ENCODE measurements at regions of chr4 and their contacts with region 1.

Region 1: GRCh38 chr4:20773144-20773997 is 73.1 kb downstream of the PACRGL start:
- DNase-seq: peak; percentile 59
- ATAC-seq: peak; percentile 99
- H3K4me3 Mint-ChIP-seq: no peak overlapping the region
- H3K27ac Mint-ChIP-seq: no peak overlapping the region
- H3K4me1 Mint-ChIP-seq: peaks cover 3% of the 10 kb centered on the region; the same call in 1 of the 2 replicates
- H3K27me3 Mint-ChIP-seq: no peaks in the 10 kb centered on the region
- CTCF ChIP-seq: peak; percentile 64

Region 2: GRCh38 chr4:20676501-20677197 is 96.7 kb before region 1 on chr4:
- CTCF ChIA-PET with region 1: no interaction called
- POLR2A ChIA-PET with region 1: no interaction called
- DNase-seq: no peak
- ATAC-seq: peak; percentile 31; the same call in 1 of the 2 replicates
- H3K4me3 Mint-ChIP-seq: no peak overlapping the region
- H3K27ac Mint-ChIP-seq: 0 out of 2 replicates have a peak overlapping the region, but pooled peaks have one; percentile 15
- H3K4me1 Mint-ChIP-seq: peaks cover 40% of the 10 kb centered on the region
- H3K27me3 Mint-ChIP-seq: no peaks in the 10 kb centered on the region
- CTCF ChIP-seq: no peak

Region 3: DNA sequence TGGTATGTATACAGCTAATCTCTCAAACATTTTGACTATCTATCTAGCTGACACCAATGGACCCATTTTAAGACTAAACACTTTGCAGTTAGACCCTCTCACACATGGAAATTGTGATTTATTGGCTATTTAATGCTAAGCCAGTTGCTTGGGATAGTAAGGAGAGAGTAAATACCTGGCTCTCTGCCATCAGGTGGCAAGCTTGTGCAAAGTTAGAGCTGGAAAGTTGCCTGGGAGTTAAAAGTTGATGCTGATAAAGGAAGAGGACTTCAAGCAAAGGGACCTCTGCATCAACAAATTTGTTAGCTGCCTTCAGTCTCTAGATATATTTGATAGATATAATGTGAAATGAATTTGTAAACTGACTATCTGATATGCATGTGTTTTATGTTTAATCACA is 12.0 kb before region 1 on chr4:
- CTCF ChIA-PET with region 1: interaction called, 13 read pairs
- POLR2A ChIA-PET with region 1: no interaction called
- DNase-seq: no peak
- ATAC-seq: no peak
- H3K4me3 Mint-ChIP-seq: no peak overlapping the region
- H3K27ac Mint-ChIP-seq: no peak overlapping the region
- H3K4me1 Mint-ChIP-seq: no peaks in the 10 kb centered on the region
- H3K27me3 Mint-ChIP-seq: no peaks in the 10 kb centered on the region
- CTCF ChIP-seq: no peak

Region 4: DNA sequence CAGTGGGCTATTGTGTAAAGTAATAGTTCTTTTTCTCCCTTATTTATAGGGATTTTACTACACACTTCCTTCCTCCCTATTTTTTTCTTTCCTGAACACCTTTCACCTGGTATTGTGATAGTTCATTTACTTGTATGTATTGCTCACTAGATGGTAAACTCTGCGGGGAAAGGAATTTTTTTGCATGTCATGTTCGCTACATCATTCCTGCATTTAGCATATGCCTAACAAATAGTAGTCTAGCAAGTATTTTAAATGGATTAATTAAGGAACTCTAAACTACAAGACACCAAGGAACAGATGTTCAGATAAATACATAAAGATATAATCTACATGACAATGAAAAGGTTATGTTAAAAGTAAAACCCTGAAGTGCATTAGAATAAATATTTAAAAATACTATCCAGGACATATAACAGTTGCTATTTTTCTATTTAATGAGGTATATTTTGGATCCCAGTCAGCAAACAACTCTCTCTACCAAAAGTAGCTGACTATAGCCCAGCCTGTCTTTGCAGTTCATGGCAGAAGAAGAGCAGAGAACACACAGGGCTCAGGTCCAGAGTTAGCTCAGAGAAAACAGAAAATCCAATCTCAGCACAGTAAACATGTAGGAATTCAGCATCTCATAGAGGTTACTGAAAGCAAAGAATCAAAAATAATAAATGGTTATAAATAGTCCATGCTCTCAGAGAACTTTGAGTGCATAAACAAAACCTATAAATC is 14.7 kb after region 1 on chr4:
- CTCF ChIA-PET with region 1: interaction called, 11 read pairs
- POLR2A ChIA-PET with region 1: no interaction called
- DNase-seq: no peak
- ATAC-seq: no peak
- H3K4me3 Mint-ChIP-seq: no peak overlapping the region
- H3K27ac Mint-ChIP-seq: no peak overlapping the region
- H3K4me1 Mint-ChIP-seq: peaks cover 8% of the 10 kb centered on the region; the same call in 1 of the 2 replicates
- H3K27me3 Mint-ChIP-seq: no peaks in the 10 kb centered on the region; the same call in 1 of the 2 replicates
- CTCF ChIP-seq: no peak

Region 5: DNA sequence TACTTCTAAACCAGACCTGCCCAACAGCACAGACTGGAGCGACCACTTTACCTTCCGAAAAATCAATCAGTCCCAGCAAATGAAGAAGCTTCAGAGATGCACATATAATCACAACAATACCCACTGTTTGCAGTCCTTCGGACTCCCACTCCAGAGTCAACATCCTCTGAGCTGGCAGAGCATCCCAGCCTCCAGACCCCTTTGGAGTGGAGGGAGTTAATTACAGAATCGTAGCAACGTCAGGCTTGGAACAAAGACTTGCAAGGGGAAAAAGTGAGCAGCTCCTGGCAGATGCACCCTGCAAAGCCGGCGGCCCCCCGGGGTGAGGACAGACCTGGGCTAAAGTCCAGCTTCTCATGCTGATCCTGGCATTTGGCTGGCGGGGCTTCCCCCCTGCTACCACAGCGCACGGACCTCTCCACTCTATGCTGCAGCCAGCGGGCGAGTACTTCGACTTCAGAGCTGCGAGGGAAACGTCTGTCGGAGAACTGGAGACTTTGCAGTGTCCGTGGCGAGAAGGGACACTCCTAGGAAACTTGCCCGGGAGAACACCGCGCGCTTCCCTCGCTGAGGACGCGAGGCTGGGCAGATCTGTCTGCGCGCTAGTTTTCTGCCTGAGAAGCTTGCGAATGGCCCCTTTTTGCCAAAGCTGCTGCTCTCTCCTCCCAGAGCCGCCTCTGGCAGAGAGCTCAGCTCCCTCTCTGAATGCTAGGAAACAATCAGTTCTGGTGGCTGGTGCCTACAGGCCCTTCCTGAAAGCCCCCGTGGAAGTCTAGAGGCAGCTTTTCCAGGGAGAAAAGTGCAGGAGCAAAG is 210.6 kb after region 1 on chr4:
- CTCF ChIA-PET with region 1: interaction called, 14 read pairs
- POLR2A ChIA-PET with region 1: no interaction called
- DNase-seq: peak; percentile 59
- ATAC-seq: peak; percentile 74
- H3K4me3 Mint-ChIP-seq: peak overlapping the region; percentile 66
- H3K27ac Mint-ChIP-seq: no peak overlapping the region
- H3K4me1 Mint-ChIP-seq: peaks cover 27% of the 10 kb centered on the region
- H3K27me3 Mint-ChIP-seq: peaks cover 26% of the 10 kb centered on the region
- CTCF ChIP-seq: no peak

Region 6: GRCh38 chr4:21469438-21470300 is 696.3 kb after region 1 on chr4:
- CTCF ChIA-PET with region 1: interaction called, 13 read pairs
- POLR2A ChIA-PET with region 1: no interaction called
- DNase-seq: no peak
- ATAC-seq: no peak
- H3K4me3 Mint-ChIP-seq: no peak overlapping the region
- H3K27ac Mint-ChIP-seq: no peak overlapping the region; the same call in 1 of the 2 replicates
- H3K4me1 Mint-ChIP-seq: no peaks in the 10 kb centered on the region
- H3K27me3 Mint-ChIP-seq: no peaks in the 10 kb centered on the region
- CTCF ChIP-seq: peak; percentile 35; the same call in 1 of the 2 replicates

Measured in WTC11 (cell line).